ENCODE measurements at regions of chr1 and their contacts with region 1.

Region 1: DNA sequence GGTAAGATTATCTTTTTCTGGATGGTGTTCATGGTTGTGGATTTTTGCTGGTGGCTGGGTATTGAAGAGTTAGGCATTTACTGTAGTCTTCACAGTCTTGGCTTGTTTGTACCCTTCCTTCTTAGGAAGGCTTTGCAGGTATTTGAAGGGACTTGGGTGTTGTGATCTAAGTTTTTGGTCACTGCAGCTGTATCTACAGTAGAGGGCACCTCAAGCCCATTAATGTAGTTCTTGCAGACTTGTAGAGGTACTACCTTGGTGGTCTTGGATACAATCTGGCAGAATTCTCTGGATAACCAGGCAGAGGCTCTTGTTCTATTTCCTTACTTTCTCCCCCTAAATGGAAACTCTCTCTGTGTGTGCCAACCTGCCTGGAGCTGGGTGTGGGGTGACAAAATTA is 155.8 kb upstream of the BRINP3 start:
- DNase-seq: no peak
- ATAC-seq: no peak

Region 2: DNA sequence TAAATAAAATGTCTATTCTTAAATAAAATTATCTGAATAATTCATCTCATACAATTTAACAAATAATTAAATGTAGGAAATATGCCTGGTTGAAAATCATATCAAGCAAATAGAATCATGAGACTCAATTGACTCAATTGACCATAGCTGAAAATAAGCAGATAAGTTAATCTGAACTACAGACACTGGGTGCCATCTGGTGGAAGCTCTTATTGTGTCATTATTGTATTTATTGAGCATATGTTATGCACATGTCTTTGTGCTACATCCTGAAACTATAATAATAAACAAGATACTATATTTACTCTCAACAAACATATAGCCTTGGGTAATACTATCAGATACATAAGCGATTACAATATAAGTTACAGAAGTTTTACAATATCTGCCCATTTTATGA is 196.9 kb before region 1 on chr1:
- intact Hi-C with region 1: no loop called
- DNase-seq: no peak
- ATAC-seq: no peak

Region 3: DNA sequence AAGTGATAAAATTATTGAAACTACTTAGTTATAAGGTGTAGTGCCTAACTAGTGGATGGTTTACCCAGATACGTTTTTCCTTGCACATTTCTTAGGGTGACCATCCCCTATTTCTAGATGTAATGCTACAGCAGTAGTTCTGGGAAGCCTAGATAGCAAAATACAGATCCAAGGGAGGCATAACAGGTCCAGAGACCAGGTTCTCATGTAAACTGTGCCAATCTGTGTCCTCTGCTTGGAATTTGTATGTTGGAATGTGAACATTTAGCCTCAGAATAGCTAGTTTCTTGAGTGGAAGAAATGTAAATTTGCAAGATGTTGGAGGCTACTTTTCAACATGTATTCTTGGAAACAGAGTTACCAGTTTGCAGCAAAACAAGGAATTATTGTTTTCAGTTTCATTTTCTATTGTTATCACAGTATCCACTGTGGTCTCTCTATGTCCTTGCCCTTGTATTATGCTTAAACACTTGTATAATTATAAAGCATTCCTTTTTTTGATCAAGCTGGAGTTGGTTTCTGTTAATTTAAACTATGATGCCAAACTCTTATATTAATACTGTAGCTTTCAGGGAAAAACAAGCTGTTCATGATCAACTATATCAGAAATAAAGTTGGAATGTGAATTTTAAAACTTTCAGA is 53.8 kb before region 1 on chr1:
- intact Hi-C with region 1: loop called (anchors 2 kb)
- DNase-seq: no peak
- ATAC-seq: no peak